ENCODE measurements at regions of chr15 and their contacts with region 1.

Region 1: DNA sequence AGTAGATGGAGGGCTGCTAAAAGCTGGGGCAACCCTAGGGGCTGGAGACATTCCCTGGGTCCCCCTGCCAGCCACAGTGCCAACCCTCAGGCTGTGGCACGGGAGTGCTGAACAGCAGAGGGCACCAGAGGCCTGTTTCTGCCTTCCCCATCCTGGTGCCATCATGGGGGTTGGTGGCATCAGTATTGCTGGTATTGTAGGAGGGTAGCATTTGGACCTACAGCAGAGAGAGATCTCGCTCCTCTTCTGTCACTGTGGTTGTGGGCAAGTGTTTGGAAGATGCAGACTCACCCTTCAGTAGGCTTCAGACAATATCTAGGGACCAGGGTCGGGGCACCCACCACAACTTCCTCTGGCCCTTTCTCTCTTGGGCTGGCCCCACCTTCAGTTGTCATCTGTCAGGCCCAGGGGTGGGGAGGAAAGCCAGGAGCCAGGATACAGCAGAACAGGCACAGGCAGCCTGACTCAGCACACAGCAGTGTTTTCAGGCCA is 123.5 kb downstream of the RPLP1 start:
- DNase-seq: peak; percentile 82
- H3K4me3 Mint-ChIP-seq: no peak overlapping the region
- H3K27ac Mint-ChIP-seq: peak overlapping the region; percentile 17
- H3K4me1 Mint-ChIP-seq: peaks cover 30% of the 10 kb centered on the region
- H3K27me3 Mint-ChIP-seq: no peaks in the 10 kb centered on the region

Region 2: GRCh38 chr15:69523010-69524001 is 52.8 kb before region 1 on chr15:
- CTCF ChIA-PET with region 1: no interaction called
- intact Hi-C with region 1: loop called (anchors 1 kb)
- DNase-seq: peak; percentile 86
- H3K4me3 Mint-ChIP-seq: no peak overlapping the region
- H3K27ac Mint-ChIP-seq: no peak overlapping the region
- H3K4me1 Mint-ChIP-seq: no peaks in the 10 kb centered on the region
- H3K27me3 Mint-ChIP-seq: peaks cover 2% of the 10 kb centered on the region

Region 3: GRCh38 chr15:69540622-69541021 is 35.5 kb before region 1 on chr15:
- CTCF ChIA-PET with region 1: no interaction called
- intact Hi-C with region 1: no loop called
- DNase-seq: no peak
- H3K4me3 Mint-ChIP-seq: no peak overlapping the region
- H3K27ac Mint-ChIP-seq: no peak overlapping the region
- H3K4me1 Mint-ChIP-seq: no peaks in the 10 kb centered on the region
- H3K27me3 Mint-ChIP-seq: no peaks in the 10 kb centered on the region

Region 4: DNA sequence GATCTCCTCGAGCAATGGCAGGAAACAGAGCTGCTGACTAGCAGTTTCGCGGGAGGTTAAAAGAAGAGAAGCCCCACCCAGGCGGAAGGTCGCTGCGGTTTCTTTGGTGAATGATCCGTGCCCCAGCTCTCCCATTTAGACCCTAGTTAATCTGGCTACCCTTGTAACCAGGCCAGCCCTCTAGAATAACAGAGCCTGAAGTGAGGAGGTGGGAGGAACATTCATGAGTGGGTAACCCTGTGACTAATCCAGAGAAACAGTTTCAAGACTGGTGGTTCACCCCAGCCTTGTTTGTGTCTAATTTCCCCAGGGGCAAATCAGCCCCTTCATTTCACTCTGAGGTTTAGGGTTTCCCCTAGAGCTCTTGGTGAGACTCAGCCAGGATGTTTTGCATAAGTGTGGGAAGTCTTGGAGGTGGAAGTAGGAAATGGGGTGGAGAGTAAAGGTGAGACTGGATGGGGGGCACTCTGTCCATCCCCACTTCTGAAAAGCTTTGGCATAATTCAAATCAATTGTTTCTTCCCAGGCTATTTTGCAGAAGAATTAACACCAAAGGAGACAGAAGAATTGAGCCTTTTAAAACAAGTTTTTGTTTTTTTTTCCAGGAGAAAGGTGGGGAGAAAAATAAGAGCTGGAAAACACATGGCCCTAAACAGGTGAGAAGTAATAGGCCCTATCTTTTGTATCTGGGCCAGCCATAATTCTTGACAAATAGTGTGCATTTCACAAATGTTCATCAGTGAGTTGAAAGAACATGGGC is 179.7 kb after region 1 on chr15:
- CTCF ChIA-PET with region 1: no interaction called
- intact Hi-C with region 1: loop called (anchors 1 kb)
- DNase-seq: peak; percentile 90
- H3K4me3 Mint-ChIP-seq: peak overlapping the region; percentile 46
- H3K27ac Mint-ChIP-seq: peak overlapping the region; percentile 97
- H3K4me1 Mint-ChIP-seq: peaks cover 94% of the 10 kb centered on the region
- H3K27me3 Mint-ChIP-seq: peaks cover 4% of the 10 kb centered on the region

Region 5: DNA sequence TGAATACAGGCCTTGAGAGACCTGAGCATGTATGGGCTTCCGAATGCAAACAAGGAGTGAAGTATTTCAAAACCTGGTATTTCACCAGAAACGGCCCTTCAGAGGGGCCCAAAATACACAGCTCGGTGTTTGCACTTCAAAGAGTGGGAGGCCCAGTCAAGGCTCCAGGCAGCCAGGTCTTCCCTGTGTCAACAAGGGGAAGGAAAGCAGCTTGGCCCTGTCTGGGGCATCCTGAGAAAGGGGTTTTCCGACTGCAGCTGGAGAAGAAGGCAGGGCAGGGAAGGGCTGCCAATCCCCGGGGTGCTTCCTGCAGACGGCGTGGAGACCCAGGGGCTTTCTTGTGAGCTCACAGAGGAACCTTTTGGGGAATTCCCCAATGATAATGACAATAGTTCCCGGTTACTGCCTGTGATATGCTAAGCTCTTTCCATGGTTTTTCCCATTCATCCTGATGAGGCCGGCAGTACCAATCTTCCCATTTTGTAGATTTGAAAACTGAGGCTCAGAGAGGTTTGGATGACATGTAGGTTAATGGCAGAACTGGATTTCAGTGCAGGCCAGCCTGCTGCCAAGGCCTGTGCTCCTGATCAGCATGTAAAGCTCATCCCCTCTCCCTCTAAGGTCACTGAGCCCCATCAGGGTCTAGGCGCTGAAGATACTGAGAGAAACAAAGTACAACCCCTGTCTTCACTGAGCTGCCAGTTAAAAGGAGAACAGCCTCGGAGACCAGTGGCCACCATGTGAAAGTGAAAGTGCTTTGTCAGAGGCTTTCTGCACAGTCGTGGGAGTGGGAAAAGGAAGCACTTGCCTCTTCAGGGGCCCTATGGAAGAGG is 564.7 kb after region 1 on chr15:
- CTCF ChIA-PET with region 1: no interaction called
- intact Hi-C with region 1: loop called (anchors 5 kb)
- DNase-seq: peak; percentile 78
- H3K4me3 Mint-ChIP-seq: no peak overlapping the region
- H3K27ac Mint-ChIP-seq: peak overlapping the region; percentile 32
- H3K4me1 Mint-ChIP-seq: peaks cover 34% of the 10 kb centered on the region
- H3K27me3 Mint-ChIP-seq: peaks cover 3% of the 10 kb centered on the region

Region 6: DNA sequence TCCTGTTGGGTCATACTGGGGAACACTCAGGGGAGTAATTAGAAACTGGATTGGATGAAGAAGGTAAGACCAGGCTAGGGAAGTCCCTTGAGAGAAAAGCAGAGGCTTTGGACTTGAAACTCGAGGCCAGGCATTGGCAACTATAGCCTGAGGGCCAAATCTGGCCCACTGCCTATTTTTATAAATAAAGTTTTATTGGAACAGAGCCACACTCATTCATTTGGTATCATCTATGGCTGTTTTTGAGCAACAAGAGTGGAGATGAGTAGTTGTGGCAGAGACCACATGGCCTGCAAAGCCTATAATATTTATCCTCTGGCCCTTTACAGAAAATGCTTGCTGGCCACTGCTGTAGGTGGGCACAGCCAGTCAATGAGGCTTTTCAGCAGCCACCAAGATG is 885.9 kb after region 1 on chr15:
- CTCF ChIA-PET with region 1: interaction called, 7 read pairs
- intact Hi-C with region 1: loop called (anchors 2 kb)
- DNase-seq: no peak
- H3K4me3 Mint-ChIP-seq: no peak overlapping the region
- H3K27ac Mint-ChIP-seq: no peak overlapping the region
- H3K4me1 Mint-ChIP-seq: peaks cover 11% of the 10 kb centered on the region
- H3K27me3 Mint-ChIP-seq: no peaks in the 10 kb centered on the region